ENCODE measurements at regions of chr1 and their contacts with region 1.

Region 1: GRCh38 chr1:116881879-116882520 is 27.7 kb upstream of the PTGFRN start:
- DNase-seq: no peak
- ATAC-seq: peak; percentile 69
- H3K4me3 ChIP-seq: no peak overlapping the region
- H3K27ac ChIP-seq: no peak overlapping the region
- H3K4me1 ChIP-seq: peaks cover 14% of the 10 kb centered on the region; the same call in 1 of the 2 replicates
- H3K27me3 ChIP-seq: no peaks in the 10 kb centered on the region
- CTCF ChIP-seq: peak; percentile 45 to 73 (median 65)
- EP300 ChIP-seq: no peak
- POLR2A ChIP-seq: no peak
- RAD21 ChIP-seq: peak; percentile 79

Region 2: GRCh38 chr1:116489231-116489697 is 392.7 kb before region 1 on chr1:
- CTCF ChIA-PET with region 1: no interaction called
- POLR2A ChIA-PET with region 1: no interaction called
- RAD21 ChIA-PET with region 1: no interaction called
- SMC1A ChIA-PET with region 1: no interaction called
- in situ Hi-C with region 1: no loop called
- intact Hi-C with region 1: no loop called
- DNase-seq: no peak
- ATAC-seq: peak; percentile 67
- H3K4me3 ChIP-seq: no peak overlapping the region
- H3K27ac ChIP-seq: no peak overlapping the region; the same call in 1 of the 2 replicates
- H3K4me1 ChIP-seq: peaks cover 10% of the 10 kb centered on the region
- H3K27me3 ChIP-seq: no peaks in the 10 kb centered on the region
- CTCF ChIP-seq: no peak
- EP300 ChIP-seq: peak in 1 of 2 experiments; percentile 24; a peak in 2 of 4 replicates
- POLR2A ChIP-seq: no peak
- RAD21 ChIP-seq: no peak

Region 3: GRCh38 chr1:116521186-116521585 is 360.8 kb before region 1 on chr1:
- CTCF ChIA-PET with region 1: no interaction called
- POLR2A ChIA-PET with region 1: no interaction called
- RAD21 ChIA-PET with region 1: no interaction called
- SMC1A ChIA-PET with region 1: no interaction called
- in situ Hi-C with region 1: no loop called
- intact Hi-C with region 1: no loop called
- DNase-seq: no peak
- ATAC-seq: no peak
- H3K4me3 ChIP-seq: no peak overlapping the region
- H3K27ac ChIP-seq: no peak overlapping the region
- H3K4me1 ChIP-seq: peaks cover 22% of the 10 kb centered on the region
- H3K27me3 ChIP-seq: no peaks in the 10 kb centered on the region
- CTCF ChIP-seq: no peak
- EP300 ChIP-seq: no peak
- POLR2A ChIP-seq: no peak
- RAD21 ChIP-seq: no peak

Region 4: DNA sequence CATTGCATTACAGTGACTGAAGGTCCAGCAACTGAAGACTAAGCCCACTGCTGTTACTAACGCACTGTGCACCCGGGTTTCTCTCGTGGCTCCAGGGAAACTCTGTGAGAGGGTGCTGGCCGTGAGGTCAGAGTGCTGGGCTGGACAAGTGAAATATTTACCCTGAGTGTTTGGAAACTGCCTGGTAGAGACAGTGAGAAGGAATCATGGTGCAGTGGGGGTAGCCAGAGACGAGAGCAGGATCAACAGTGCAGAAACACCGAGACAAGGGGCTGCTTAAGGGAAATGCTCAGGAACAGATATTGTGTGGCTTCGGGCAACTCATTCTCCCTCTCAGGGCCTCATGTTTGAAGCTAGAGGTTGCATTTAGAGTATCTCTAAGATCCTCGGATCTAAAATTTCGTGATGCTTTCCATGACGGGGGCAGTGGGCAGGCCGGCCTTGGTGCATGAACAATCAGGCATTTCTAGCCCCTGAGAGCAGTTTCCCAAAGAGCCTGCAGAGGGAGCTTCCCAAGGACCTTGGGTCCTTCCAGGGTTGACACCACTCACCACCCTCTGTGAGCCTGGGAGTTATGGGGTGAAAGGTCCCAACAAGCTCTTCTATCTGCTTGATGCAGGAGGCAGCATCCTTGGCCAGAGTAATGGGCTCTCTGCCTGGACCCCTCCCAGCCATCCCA is 118.1 kb before region 1 on chr1:
- CTCF ChIA-PET with region 1: interaction called, 12 read pairs
- POLR2A ChIA-PET with region 1: no interaction called
- RAD21 ChIA-PET with region 1: interaction called, 21 read pairs
- SMC1A ChIA-PET with region 1: interaction called, 31 read pairs
- in situ Hi-C with region 1: no loop called
- intact Hi-C with region 1: no loop called
- DNase-seq: no peak
- ATAC-seq: peak; percentile 22
- H3K4me3 ChIP-seq: no peak overlapping the region
- H3K27ac ChIP-seq: no peak overlapping the region
- H3K4me1 ChIP-seq: peaks cover 10% of the 10 kb centered on the region
- H3K27me3 ChIP-seq: no peaks in the 10 kb centered on the region; a peak in 1 of 4 replicates
- CTCF ChIP-seq: peak; percentile 25 to 41 (median 36); a peak in 5 of 6 replicates
- EP300 ChIP-seq: no peak
- POLR2A ChIP-seq: no peak
- RAD21 ChIP-seq: peak; percentile 44

Region 5: DNA sequence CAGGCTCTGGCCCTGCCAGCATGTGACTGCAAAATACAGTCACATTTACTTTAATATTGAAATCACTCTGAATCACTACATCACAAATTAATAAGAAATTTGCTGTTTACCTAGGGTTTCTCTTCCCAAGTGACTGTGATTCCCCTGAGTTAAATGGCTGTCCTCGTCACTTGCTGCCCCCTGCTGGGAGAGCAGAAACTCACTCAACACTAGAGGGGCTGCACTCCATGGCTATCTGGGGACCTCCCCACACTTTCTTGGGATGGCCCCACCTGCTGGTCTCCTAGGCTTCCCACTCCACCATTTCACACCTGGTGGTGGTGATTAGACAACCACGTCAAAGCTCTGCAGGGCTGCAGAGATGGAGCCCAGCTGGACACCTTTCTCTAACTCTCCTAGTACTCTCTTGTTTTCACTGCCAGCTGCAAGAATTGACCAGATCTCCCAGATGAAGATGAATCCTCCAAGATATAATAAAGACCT is 64.4 kb before region 1 on chr1:
- CTCF ChIA-PET with region 1: interaction called, 21 read pairs
- POLR2A ChIA-PET with region 1: interaction called, 3 read pairs
- RAD21 ChIA-PET with region 1: interaction called, 6 read pairs
- SMC1A ChIA-PET with region 1: interaction called, 13 read pairs
- in situ Hi-C with region 1: no loop called
- intact Hi-C with region 1: no loop called
- DNase-seq: no peak
- ATAC-seq: peak; percentile 91
- H3K4me3 ChIP-seq: no peak overlapping the region
- H3K27ac ChIP-seq: no peak overlapping the region
- H3K4me1 ChIP-seq: peaks cover 4% of the 10 kb centered on the region; the same call in 1 of the 2 replicates
- H3K27me3 ChIP-seq: no peaks in the 10 kb centered on the region
- CTCF ChIP-seq: peak; percentile 76 to 78 (median 77)
- EP300 ChIP-seq: no peak
- POLR2A ChIP-seq: no peak
- RAD21 ChIP-seq: peak; percentile 90

Region 6: GRCh38 chr1:116842654-116843053 is 39.3 kb before region 1 on chr1:
- CTCF ChIA-PET with region 1: interaction called, 10 read pairs
- POLR2A ChIA-PET with region 1: interaction called, 10 read pairs
- RAD21 ChIA-PET with region 1: interaction called, 30 read pairs
- SMC1A ChIA-PET with region 1: interaction called, 57 read pairs
- in situ Hi-C with region 1: no loop called
- intact Hi-C with region 1: no loop called
- DNase-seq: no peak
- ATAC-seq: no peak; the same call in 2 of the 3 replicates
- H3K4me3 ChIP-seq: no peak overlapping the region
- H3K27ac ChIP-seq: no peak overlapping the region
- H3K4me1 ChIP-seq: peaks cover 2% of the 10 kb centered on the region; the same call in 1 of the 2 replicates
- H3K27me3 ChIP-seq: no peaks in the 10 kb centered on the region
- CTCF ChIP-seq: no peak
- EP300 ChIP-seq: no peak
- POLR2A ChIP-seq: no peak
- RAD21 ChIP-seq: no peak

Region 7: GRCh38 chr1:116895073-116895472 is 13.1 kb after region 1 on chr1:
- CTCF ChIA-PET with region 1: interaction called, 7 read pairs
- POLR2A ChIA-PET with region 1: no interaction called
- RAD21 ChIA-PET with region 1: interaction called, 3 read pairs
- SMC1A ChIA-PET with region 1: interaction called, 10 read pairs
- in situ Hi-C with region 1: no loop called
- intact Hi-C with region 1: no loop called
- DNase-seq: no peak
- ATAC-seq: no peak
- H3K4me3 ChIP-seq: no peak overlapping the region
- H3K27ac ChIP-seq: no peak overlapping the region
- H3K4me1 ChIP-seq: no peaks in the 10 kb centered on the region
- H3K27me3 ChIP-seq: no peaks in the 10 kb centered on the region; a peak in 1 of 4 replicates
- CTCF ChIP-seq: no peak
- EP300 ChIP-seq: no peak
- POLR2A ChIP-seq: no peak
- RAD21 ChIP-seq: no peak

Region 8: DNA sequence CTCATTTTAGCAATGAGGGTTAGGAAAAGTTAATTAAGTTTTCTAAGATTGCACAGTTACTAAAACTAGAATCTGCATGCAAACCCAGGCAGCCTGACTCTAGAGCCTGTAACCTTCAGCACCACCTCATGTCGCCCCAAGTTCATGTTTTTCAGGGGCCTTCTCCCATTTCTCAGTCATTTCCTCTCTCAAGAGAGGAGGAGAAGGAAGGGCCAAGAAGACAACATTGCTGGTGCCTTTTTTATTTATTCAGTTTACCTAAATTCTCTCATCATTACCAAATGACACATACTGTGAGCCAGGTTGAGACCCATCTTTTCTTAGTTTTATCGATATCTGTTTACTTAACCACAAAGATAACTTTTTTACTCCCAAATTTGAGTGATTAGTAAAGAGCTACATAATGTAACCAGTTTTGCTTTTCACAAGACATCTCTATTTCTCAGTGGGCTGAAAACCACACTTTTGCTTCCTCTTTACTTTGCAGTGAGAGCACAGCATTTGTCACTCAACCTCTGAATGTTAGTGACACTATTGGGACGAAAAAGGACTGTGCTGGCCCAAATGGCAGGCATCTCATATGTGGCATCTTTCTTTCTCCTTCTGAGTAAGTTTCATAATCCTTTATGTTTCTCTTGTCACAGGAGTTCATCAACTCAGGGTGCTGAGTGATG is 119.4 kb after region 1 on chr1 and contains the start of gene CD101:
- CTCF ChIA-PET with region 1: interaction called, 7 read pairs
- POLR2A ChIA-PET with region 1: interaction called, 4 read pairs
- RAD21 ChIA-PET with region 1: interaction called, 16 read pairs
- SMC1A ChIA-PET with region 1: interaction called, 6 read pairs
- in situ Hi-C with region 1: no loop called
- intact Hi-C with region 1: no loop called
- DNase-seq: peak; percentile 82
- ATAC-seq: peak; percentile 95
- H3K4me3 ChIP-seq: peak within 1 kb of the TSS; percentile 6; the same call in 1 of the 2 replicates
- H3K27ac ChIP-seq: peak within 1 kb of the TSS; percentile 49
- H3K4me1 ChIP-seq: peaks cover 20% of the 10 kb centered on the region
- H3K27me3 ChIP-seq: no peaks in the 10 kb centered on the region
- CTCF ChIP-seq: no peak
- EP300 ChIP-seq: peak; percentile 66 to 85
- POLR2A ChIP-seq: no peak
- RAD21 ChIP-seq: peak; percentile 36; the same call in 1 of the 2 replicates
- polyA plus RNA-seq, gene CD101: 1.9 to 2.7 TPM